ENCODE measurements at regions of chr17 and their contacts with region 1.

Region 1: GRCh38 chr17:81927653-81928543 is at the start of gene MAFG:
- DNase-seq: peak; percentile 97
- ATAC-seq: peak; percentile 71
- H3K4me3 ChIP-seq: peak within 1 kb of the TSS; percentile 40 to 78 (median 65)
- H3K4me3 Mint-ChIP-seq: peak within 1 kb of the TSS; percentile 87
- H3K27ac ChIP-seq: peak within 1 kb of the TSS; percentile 26 to 85
- H3K27ac Mint-ChIP-seq: peak within 1 kb of the TSS; percentile 86
- H3K4me1 ChIP-seq: peaks cover 26 to 35% of the 10 kb centered on the region in 2 donors
- H3K4me1 Mint-ChIP-seq: peaks cover 22% of the 10 kb centered on the region
- H3K27me3 ChIP-seq: peaks cover 0 to 23% (median 9%) of the 10 kb centered on the region in 4 experiments
- H3K27me3 Mint-ChIP-seq: peaks cover 10% of the 10 kb centered on the region
- CTCF ChIP-seq: peak; percentile 52
- total RNA-seq, gene MAFG: 27.9 and 29.0 TPM in 2 replicates

Region 2: GRCh38 chr17:80817321-80818251 is 1110.3 kb before region 1 on chr17:
- CTCF ChIA-PET with region 1: no interaction called
- POLR2A ChIA-PET with region 1: no interaction called
- intact Hi-C with region 1: no loop called
- DNase-seq: no peak
- ATAC-seq: no peak
- H3K4me3 ChIP-seq: no peak overlapping the region
- H3K4me3 Mint-ChIP-seq: no peak overlapping the region
- H3K27ac ChIP-seq: no peak overlapping the region
- H3K27ac Mint-ChIP-seq: no peak overlapping the region
- H3K4me1 ChIP-seq: peaks cover 0 to 3% of the 10 kb centered on the region in 2 donors
- H3K4me1 Mint-ChIP-seq: peaks cover 4% of the 10 kb centered on the region
- H3K27me3 ChIP-seq: no peaks in the 10 kb centered on the region
- H3K27me3 Mint-ChIP-seq: no peaks in the 10 kb centered on the region
- CTCF ChIP-seq: no peak

Region 3: GRCh38 chr17:81833160-81833920 is 94.6 kb before region 1 on chr17 and contains the start of gene MCRIP1:
- CTCF ChIA-PET with region 1: no interaction called
- POLR2A ChIA-PET with region 1: no interaction called
- intact Hi-C with region 1: loop called (anchors 5 kb)
- DNase-seq: peak; percentile 96
- ATAC-seq: peak; percentile 85
- H3K4me3 ChIP-seq: peak within 1 kb of the TSS; percentile 21 to 80 (median 78)
- H3K4me3 Mint-ChIP-seq: peak within 1 kb of the TSS; percentile 97
- H3K27ac ChIP-seq: peak within 1 kb of the TSS; percentile 85 to 98
- H3K27ac Mint-ChIP-seq: peak within 1 kb of the TSS; percentile 95
- H3K4me1 ChIP-seq: peaks cover 18 to 20% of the 10 kb centered on the region in 2 donors
- H3K4me1 Mint-ChIP-seq: peaks cover 23% of the 10 kb centered on the region
- H3K27me3 ChIP-seq: no peaks in the 10 kb centered on the region
- H3K27me3 Mint-ChIP-seq: no peaks in the 10 kb centered on the region
- CTCF ChIP-seq: no peak
- total RNA-seq, gene MCRIP1: 69.7 and 74.3 TPM in 2 replicates

Region 4: DNA sequence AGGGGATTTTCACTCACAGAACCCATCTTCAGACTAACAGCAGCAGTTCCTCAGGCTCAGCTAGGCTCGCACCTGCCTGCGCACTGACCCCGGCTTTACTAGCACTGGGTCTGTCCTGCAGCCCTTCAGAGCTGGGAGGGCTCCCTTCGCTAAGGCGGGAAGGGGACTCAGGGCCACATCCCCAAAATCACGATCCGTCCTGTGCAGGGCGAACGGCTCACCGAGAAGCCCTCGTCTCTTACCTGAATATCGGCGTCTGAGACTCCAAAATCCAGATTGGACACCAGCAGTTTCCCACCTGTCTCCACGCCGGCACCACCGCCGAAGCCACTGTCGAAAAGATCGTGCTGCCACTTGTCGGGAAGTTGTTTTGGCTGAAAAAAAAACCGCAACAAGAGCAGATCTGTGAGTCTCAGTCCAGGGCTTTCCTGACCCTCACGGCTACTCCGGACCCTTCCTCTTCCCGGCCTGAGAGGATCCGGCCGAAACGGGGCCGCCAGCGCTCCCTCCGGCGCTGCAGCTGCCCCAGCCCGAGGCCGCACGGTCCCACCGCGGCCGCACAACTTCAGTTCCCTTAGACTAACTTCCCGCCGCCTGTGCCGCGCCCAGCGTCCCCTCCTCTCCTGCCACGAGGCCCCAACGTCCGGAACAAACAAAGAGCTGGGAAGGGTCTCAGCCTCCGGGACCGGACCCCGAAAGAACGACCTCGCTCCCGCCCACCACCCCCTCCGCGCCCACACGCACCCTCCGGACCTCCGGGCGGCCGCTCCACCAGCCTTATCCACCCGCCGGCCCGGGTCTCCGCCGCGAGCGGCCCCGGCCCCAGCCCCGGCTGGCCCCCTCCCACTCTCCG is 37.2 kb before region 1 on chr17:
- CTCF ChIA-PET with region 1: no interaction called
- POLR2A ChIA-PET with region 1: interaction called, 8 read pairs
- intact Hi-C with region 1: loop called (anchors 5 kb)
- DNase-seq: peak; percentile 55
- ATAC-seq: no peak
- H3K4me3 ChIP-seq: peak overlapping the region; percentile 4 to 71 (median 62)
- H3K4me3 Mint-ChIP-seq: peak overlapping the region; percentile 83
- H3K27ac ChIP-seq: peak overlapping the region; percentile 34 to 83
- H3K27ac Mint-ChIP-seq: peak overlapping the region; percentile 88
- H3K4me1 ChIP-seq: peaks cover 10 to 25% of the 10 kb centered on the region in 2 donors
- H3K4me1 Mint-ChIP-seq: peaks cover 19% of the 10 kb centered on the region
- H3K27me3 ChIP-seq: no peaks in the 10 kb centered on the region
- H3K27me3 Mint-ChIP-seq: no peaks in the 10 kb centered on the region
- CTCF ChIP-seq: no peak

Region 5: DNA sequence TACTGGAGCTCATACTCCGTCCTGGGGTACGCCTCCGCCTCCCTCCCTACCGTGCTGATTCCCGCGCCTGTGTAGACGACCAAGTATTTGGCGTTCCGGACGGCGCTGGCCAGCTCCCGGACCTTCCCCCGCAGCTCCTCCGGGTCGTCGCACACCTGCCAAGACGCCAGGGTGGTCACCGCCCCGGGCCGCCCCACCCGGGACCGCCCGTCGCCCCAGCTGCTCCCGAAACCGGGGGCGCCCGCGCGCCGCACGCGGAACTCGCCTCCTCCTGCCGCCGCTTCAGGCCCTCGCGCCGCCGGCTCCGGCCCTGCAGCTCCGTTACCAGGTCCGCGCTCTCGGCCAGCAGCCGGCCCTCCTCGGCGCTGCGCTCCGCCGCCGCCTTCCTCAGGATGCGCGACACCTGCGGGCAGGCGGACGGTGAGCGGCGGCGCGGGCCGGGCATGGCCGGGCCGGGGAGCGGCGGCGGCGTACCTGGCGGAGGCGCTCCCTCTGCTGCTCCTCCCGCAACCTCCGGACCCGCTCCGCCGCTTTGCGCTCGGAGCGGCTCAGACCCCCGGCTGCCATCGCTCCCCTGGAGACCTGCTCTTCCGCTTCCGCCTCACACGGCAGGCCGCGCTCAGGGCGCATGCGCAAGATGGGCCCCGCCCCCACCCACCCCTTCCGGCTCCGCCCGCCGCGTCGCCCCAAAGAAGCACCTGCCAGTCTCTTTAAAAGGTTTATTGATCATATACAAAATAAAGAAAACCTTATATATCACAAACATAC is 10.1 kb before region 1 on chr17 and contains the start of gene SIRT7:
- CTCF ChIA-PET with region 1: interaction called, 8 read pairs
- POLR2A ChIA-PET with region 1: interaction called, 6 read pairs
- intact Hi-C with region 1: loop called (anchors 1 kb)
- DNase-seq: peak; percentile 92
- ATAC-seq: peak; percentile 90
- H3K4me3 ChIP-seq: peak within 1 kb of the TSS; percentile 53 to 75 (median 69)
- H3K4me3 Mint-ChIP-seq: peak within 1 kb of the TSS; percentile 91
- H3K27ac ChIP-seq: peak within 1 kb of the TSS; percentile 44 to 61
- H3K27ac Mint-ChIP-seq: peak within 1 kb of the TSS; percentile 90
- H3K4me1 ChIP-seq: peaks cover 13 to 22% of the 10 kb centered on the region in 2 donors
- H3K4me1 Mint-ChIP-seq: peaks cover 28% of the 10 kb centered on the region
- H3K27me3 ChIP-seq: no peaks in the 10 kb centered on the region
- H3K27me3 Mint-ChIP-seq: no peaks in the 10 kb centered on the region
- CTCF ChIP-seq: no peak
- total RNA-seq, gene SIRT7: 82.7 and 83.2 TPM in 2 replicates

Region 6: GRCh38 chr17:81959362-81960129 is 31.6 kb after region 1 on chr17:
- CTCF ChIA-PET with region 1: interaction called, 16 read pairs
- POLR2A ChIA-PET with region 1: no interaction called
- intact Hi-C with region 1: no loop called
- DNase-seq: peak; percentile 90
- ATAC-seq: peak; percentile 95
- H3K4me3 ChIP-seq: peak overlapping the region in 4 of 5 experiments; percentile 21 to 55 (median 46)
- H3K4me3 Mint-ChIP-seq: peak overlapping the region; percentile 64
- H3K27ac ChIP-seq: no peak overlapping the region
- H3K27ac Mint-ChIP-seq: no peak overlapping the region
- H3K4me1 ChIP-seq: peaks cover 15 to 16% of the 10 kb centered on the region in 2 donors
- H3K4me1 Mint-ChIP-seq: peaks cover 1% of the 10 kb centered on the region
- H3K27me3 ChIP-seq: peaks cover 0 to 53% (median 28%) of the 10 kb centered on the region in 4 experiments
- H3K27me3 Mint-ChIP-seq: peaks cover 21% of the 10 kb centered on the region
- CTCF ChIP-seq: peak; percentile 86

Measured in B cell (primary cell).